GM23248 (cell line): ENCODE measurements at regions of chr21 and their contacts with region 1.

Region 1: DNA sequence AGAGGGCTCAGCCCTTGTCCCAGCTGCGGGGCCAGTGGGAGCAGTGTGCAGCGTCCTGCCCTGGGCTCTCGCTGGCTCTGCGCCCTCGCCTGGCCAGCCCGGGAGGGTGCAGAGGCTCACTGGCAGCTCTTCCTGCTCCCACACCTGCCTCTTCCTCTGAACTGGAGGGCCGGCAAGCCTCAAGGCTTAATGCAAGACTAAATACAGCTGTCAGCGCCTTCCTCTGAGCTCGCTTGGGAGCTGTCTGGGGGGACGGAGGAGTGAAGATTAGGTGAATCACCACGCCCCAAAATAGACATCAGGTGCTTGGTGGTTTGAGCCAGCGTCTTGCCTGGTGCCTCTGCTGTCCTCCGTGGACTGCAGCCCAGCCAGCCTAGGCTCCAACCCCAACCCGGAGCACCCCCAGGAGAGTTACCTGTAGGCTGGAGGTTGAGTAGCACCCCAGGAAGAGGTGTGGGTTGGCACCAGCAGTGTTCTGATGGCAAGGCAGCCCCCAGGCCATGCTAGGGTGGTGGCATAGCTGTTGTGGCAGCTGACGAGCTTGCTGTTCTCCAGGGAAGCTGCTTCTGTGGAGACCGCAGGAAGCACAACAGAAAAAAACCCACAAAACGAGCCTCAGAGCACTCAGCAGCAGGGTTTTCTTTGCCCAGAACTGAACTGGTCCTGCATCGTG is 36.9 kb downstream of the UMODL1 start:
- DNase-seq: peak; percentile 70
- H3K4me3 ChIP-seq: no peak overlapping the region
- H3K27ac ChIP-seq: no peak overlapping the region
- H3K4me1 ChIP-seq: no peaks in the 10 kb centered on the region
- H3K27me3 ChIP-seq: no peaks in the 10 kb centered on the region

Region 2: GRCh38 chr21:41926117-41926806 is 181.8 kb before region 1 on chr21:
- in situ Hi-C with region 1: loop called (anchors 25 kb)
- DNase-seq: peak; percentile 76
- H3K4me3 ChIP-seq: peak overlapping the region; percentile 69
- H3K27ac ChIP-seq: peak overlapping the region; percentile 48
- H3K4me1 ChIP-seq: peaks cover 6% of the 10 kb centered on the region
- H3K27me3 ChIP-seq: no peaks in the 10 kb centered on the region